ENCODE measurements at regions of chr12 and their contacts with region 1.

Region 1: GRCh38 chr12:59834659-59835474 is 239.0 kb downstream of the SLC16A7 start:
- DNase-seq: peak in 4 of 14 experiments; percentile 2 to 46 (median 34)
- ATAC-seq: no peak
- H3K4me3 ChIP-seq: no peak overlapping the region
- H3K4me3 Mint-ChIP-seq: no peak overlapping the region
- H3K27ac ChIP-seq: no peak overlapping the region
- H3K27ac Mint-ChIP-seq: no peak overlapping the region
- H3K4me1 ChIP-seq: no peaks in the 10 kb centered on the region
- H3K4me1 Mint-ChIP-seq: no peaks in the 10 kb centered on the region
- H3K27me3 ChIP-seq: no peaks in the 10 kb centered on the region
- H3K27me3 Mint-ChIP-seq: no peaks in the 10 kb centered on the region
- CTCF ChIP-seq: peak; percentile 69

Region 2: GRCh38 chr12:59403259-59403932 is 431.5 kb before region 1 on chr12:
- CTCF ChIA-PET with region 1: no interaction called
- POLR2A ChIA-PET with region 1: no interaction called
- intact Hi-C with region 1: loop called (anchors 2 kb)
- DNase-seq: peak in 8 of 14 experiments; percentile 1 to 70 (median 25)
- ATAC-seq: peak; percentile 49
- H3K4me3 ChIP-seq: no peak overlapping the region
- H3K4me3 Mint-ChIP-seq: no peak overlapping the region
- H3K27ac ChIP-seq: no peak overlapping the region
- H3K27ac Mint-ChIP-seq: no peak overlapping the region
- H3K4me1 ChIP-seq: no peaks in the 10 kb centered on the region
- H3K4me1 Mint-ChIP-seq: no peaks in the 10 kb centered on the region
- H3K27me3 ChIP-seq: no peaks in the 10 kb centered on the region
- H3K27me3 Mint-ChIP-seq: no peaks in the 10 kb centered on the region
- CTCF ChIP-seq: peak; percentile 75

Region 3: GRCh38 chr12:59444932-59445331 is 389.9 kb before region 1 on chr12:
- CTCF ChIA-PET with region 1: no interaction called
- POLR2A ChIA-PET with region 1: no interaction called
- intact Hi-C with region 1: loop called in 1 of 2 experiments (anchors 2 kb)
- DNase-seq: peak in 7 of 14 experiments; percentile 1 to 56 (median 23)
- ATAC-seq: no peak
- H3K4me3 ChIP-seq: no peak overlapping the region
- H3K4me3 Mint-ChIP-seq: no peak overlapping the region
- H3K27ac ChIP-seq: no peak overlapping the region
- H3K27ac Mint-ChIP-seq: no peak overlapping the region
- H3K4me1 ChIP-seq: no peaks in the 10 kb centered on the region
- H3K4me1 Mint-ChIP-seq: no peaks in the 10 kb centered on the region
- H3K27me3 ChIP-seq: no peaks in the 10 kb centered on the region
- H3K27me3 Mint-ChIP-seq: no peaks in the 10 kb centered on the region
- CTCF ChIP-seq: peak; percentile 49

Region 4: DNA sequence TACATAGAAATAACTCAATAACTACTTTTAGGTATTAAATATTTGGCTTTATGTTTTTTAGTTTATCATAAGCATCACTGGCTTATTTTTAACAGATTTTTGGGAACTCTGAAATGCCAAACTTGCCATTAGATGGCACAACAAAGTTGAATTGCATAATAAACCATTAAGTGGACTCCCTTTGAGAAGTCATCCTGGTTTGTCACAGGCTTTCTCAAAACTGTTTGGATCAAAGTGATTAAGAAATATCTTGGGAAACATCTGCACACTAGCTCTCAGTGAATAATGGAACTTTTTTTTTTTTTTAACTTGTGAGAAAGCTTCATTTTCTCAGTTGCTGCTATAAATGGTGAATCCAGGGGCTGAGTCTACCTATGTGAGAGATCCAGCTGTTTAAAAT is 234.7 kb before region 1 on chr12:
- CTCF ChIA-PET with region 1: no interaction called
- POLR2A ChIA-PET with region 1: no interaction called
- intact Hi-C with region 1: no loop called
- DNase-seq: peak in 1 of 14 experiments; percentile 20
- ATAC-seq: no peak
- H3K4me3 ChIP-seq: no peak overlapping the region
- H3K4me3 Mint-ChIP-seq: no peak overlapping the region
- H3K27ac ChIP-seq: no peak overlapping the region
- H3K27ac Mint-ChIP-seq: peak overlapping the region; percentile 99
- H3K4me1 ChIP-seq: peaks cover 13% of the 10 kb centered on the region
- H3K4me1 Mint-ChIP-seq: peaks cover 89% of the 10 kb centered on the region
- H3K27me3 ChIP-seq: no peaks in the 10 kb centered on the region
- H3K27me3 Mint-ChIP-seq: peaks cover 4% of the 10 kb centered on the region
- CTCF ChIP-seq: no peak

Region 5: DNA sequence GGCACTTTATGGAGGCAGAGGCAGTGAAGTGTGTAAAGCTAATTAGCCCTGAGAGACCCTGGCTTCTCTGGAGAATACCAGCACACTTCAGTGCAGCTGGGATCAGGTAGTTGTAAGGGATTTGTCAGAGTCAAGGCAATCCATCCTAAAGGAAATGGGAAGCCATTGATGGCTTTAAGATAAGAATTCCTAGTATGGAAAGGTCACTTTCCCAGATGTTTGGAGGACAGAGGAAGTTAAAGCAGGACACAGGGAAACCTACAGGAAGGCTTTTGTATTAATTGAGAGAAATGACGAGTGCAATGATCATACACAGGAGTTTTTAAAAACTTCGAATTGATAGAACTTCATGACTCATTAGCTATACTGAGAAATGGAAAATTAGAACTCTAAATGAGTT is 15.4 kb after region 1 on chr12:
- CTCF ChIA-PET with region 1: no interaction called
- POLR2A ChIA-PET with region 1: no interaction called
- intact Hi-C with region 1: no loop called
- DNase-seq: no peak
- ATAC-seq: no peak
- H3K4me3 ChIP-seq: no peak overlapping the region
- H3K4me3 Mint-ChIP-seq: no peak overlapping the region
- H3K27ac ChIP-seq: no peak overlapping the region
- H3K27ac Mint-ChIP-seq: no peak overlapping the region
- H3K4me1 ChIP-seq: no peaks in the 10 kb centered on the region
- H3K4me1 Mint-ChIP-seq: no peaks in the 10 kb centered on the region
- H3K27me3 ChIP-seq: no peaks in the 10 kb centered on the region
- H3K27me3 Mint-ChIP-seq: no peaks in the 10 kb centered on the region
- CTCF ChIP-seq: no peak

Measured in CD4-positive, alpha-beta T cell (primary cell).